Caco-2 (cell line): ENCODE measurements at regions of chr10 and their contacts with region 1.

Region 1: GRCh38 chr10:23516530-23516929 is 77.7 kb downstream of the OTUD1 start:
- DNase-seq: peak in 1 of 2 experiments; percentile 32
- H3K4me3 ChIP-seq: no peak overlapping the region
- H3K4me3 Mint-ChIP-seq: no peak overlapping the region
- H3K27ac Mint-ChIP-seq: no peak overlapping the region
- H3K4me1 ChIP-seq: no peaks in the 10 kb centered on the region
- H3K4me1 Mint-ChIP-seq: no peaks in the 10 kb centered on the region
- H3K27me3 ChIP-seq: no peaks in the 10 kb centered on the region; the same call in 1 of the 2 replicates
- H3K27me3 Mint-ChIP-seq: peaks cover 29% of the 10 kb centered on the region
- CTCF ChIP-seq: peak; percentile 55 to 73

Region 2: DNA sequence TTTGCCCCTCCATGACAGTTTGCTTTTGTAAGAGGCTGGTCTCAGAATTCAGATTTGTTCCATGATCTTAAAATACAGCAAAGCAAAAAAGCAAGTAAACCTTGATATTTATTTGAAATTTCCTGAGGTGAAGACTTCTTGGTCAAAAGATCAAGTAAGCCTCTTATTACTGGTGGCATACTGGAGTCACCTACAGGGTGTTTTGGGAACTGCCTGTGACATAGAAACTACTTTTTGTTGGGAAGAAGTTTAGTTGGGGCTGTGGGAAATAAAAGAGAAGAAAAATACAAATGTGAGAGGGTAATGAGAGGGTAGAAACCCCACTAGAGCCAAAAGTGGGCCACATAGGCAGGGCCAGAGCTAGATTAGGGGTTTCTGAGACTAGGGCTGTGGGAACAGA is 140.2 kb after region 1 on chr10:
- CTCF ChIA-PET with region 1: no interaction called
- POLR2A ChIA-PET with region 1: no interaction called
- intact Hi-C with region 1: loop called (anchors 1 kb)
- DNase-seq: peak in 1 of 2 experiments; percentile 25
- H3K4me3 ChIP-seq: no peak overlapping the region
- H3K4me3 Mint-ChIP-seq: no peak overlapping the region
- H3K27ac Mint-ChIP-seq: no peak overlapping the region
- H3K4me1 ChIP-seq: no peaks in the 10 kb centered on the region
- H3K4me1 Mint-ChIP-seq: no peaks in the 10 kb centered on the region
- H3K27me3 ChIP-seq: no peaks in the 10 kb centered on the region; the same call in 1 of the 2 replicates
- H3K27me3 Mint-ChIP-seq: peaks cover 9% of the 10 kb centered on the region
- CTCF ChIP-seq: peak; percentile 72 to 74

Region 3: GRCh38 chr10:23702977-23703414 is 186.5 kb after region 1 on chr10:
- CTCF ChIA-PET with region 1: no interaction called
- POLR2A ChIA-PET with region 1: no interaction called
- intact Hi-C with region 1: loop called (anchors 1 kb)
- DNase-seq: peak; percentile 78
- H3K4me3 ChIP-seq: no peak overlapping the region
- H3K4me3 Mint-ChIP-seq: no peak overlapping the region
- H3K27ac Mint-ChIP-seq: no peak overlapping the region
- H3K4me1 ChIP-seq: no peaks in the 10 kb centered on the region
- H3K4me1 Mint-ChIP-seq: no peaks in the 10 kb centered on the region
- H3K27me3 ChIP-seq: no peaks in the 10 kb centered on the region
- H3K27me3 Mint-ChIP-seq: peaks cover 15% of the 10 kb centered on the region
- CTCF ChIP-seq: peak; percentile 92 to 95